ENCODE measurements at regions of chr13 and their contacts with region 1.

Region 1: GRCh38 chr13:102845630-102846260 is at the start of gene ERCC5:
- DNase-seq: peak; percentile 93
- ATAC-seq: peak; percentile 81
- H3K4me3 ChIP-seq: peak within 1 kb of the TSS; percentile 95
- H3K27ac ChIP-seq: peak within 1 kb of the TSS; percentile 74
- H3K4me1 ChIP-seq: 0 out of 2 replicates have a peak, but pooled peaks cover 6% of the 10 kb centered on the region
- H3K27me3 ChIP-seq: no peaks in the 10 kb centered on the region
- CTCF ChIP-seq: no peak
- total RNA-seq, gene ERCC5: 19.3 and 23.7 TPM in 2 replicates

Region 2: DNA sequence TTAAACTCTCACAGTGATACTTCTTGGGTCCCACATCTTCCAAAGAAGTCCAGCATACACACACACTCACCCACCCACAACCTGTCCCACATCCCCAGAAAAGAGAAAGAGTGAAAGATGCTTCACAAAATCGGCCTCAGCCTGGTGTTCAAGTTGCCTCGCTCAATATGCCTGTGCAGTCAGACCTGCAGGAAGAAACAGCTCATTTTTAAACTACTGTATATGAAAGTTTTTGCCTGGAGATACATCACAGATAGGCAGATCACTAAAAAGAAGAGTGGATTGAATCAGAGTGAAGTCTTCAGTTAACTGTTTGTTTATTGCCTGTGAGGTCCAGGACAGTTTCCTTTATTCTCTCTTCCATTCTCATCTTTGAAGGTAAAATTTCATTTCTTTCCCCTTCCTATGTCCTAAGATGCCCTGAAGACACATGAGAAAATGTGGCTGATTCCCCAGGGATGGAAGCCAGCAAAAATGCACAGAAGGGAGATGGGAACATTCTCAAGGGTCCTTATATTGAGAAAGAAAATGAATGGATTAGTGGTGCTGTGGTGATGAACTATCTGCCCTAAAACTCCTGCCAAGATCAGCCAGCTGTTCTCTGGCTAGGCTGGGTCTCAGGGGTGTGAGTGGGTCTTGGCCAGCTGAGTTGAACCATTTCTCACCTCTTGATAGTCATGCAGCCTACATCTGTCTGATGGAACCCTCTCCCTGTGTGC is 1134.3 kb before region 1 on chr13:
- CTCF ChIA-PET with region 1: no interaction called
- POLR2A ChIA-PET with region 1: no interaction called
- intact Hi-C with region 1: no loop called
- DNase-seq: no peak
- ATAC-seq: no peak
- H3K4me3 ChIP-seq: no peak overlapping the region
- H3K27ac ChIP-seq: no peak overlapping the region
- H3K4me1 ChIP-seq: peaks cover 7% of the 10 kb centered on the region
- H3K27me3 ChIP-seq: no peaks in the 10 kb centered on the region
- CTCF ChIP-seq: no peak

Region 3: DNA sequence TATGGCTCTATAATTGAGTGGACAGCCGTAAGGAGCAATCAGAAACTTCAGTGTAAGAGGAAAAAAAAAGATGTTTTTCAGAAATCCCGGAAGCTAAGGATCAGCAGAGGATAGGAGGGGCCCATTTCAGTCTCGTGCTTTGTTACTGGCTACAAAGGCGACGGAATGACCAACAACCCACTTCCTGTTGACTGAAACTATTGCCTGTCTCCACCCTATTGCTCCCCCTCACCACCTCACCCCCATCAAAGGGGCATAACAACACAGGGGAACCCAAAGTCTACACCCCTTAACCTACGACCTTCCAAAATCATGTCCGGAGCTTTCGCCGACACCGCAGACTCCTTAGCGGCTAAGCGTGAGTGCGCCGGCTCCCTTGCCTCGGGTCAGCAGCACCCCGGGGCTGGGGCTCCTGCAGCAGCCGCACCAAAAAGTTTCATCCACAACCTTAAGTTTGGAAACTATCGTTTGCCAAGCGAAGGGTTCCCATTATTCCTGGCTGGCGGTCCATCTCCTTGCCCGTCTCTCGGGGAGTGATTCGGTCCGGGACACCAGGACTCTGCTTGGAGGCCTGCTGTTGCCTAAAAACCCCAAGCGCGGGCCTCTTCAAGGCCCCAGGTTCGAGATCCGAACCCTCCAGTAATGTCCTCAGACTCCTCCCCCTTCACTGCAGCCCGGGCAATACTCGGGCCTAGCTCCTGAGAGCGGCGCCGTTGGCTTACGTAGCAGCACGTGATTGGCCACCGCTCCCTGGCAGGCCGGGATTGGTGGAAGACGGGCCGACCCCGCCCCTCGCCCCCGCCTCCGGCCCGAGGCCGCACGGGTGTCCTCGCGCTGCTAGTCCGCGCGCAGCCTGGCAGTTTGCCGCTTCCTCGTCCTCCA is 249.4 kb before region 1 on chr13 and contains the start of gene TPP2:
- CTCF ChIA-PET with region 1: no interaction called
- POLR2A ChIA-PET with region 1: interaction called, 6 read pairs
- intact Hi-C with region 1: loop called (anchors 1 kb)
- DNase-seq: peak; percentile 95
- ATAC-seq: peak; percentile 84
- H3K4me3 ChIP-seq: peak within 1 kb of the TSS; percentile 94
- H3K27ac ChIP-seq: peak within 1 kb of the TSS; percentile 82
- H3K4me1 ChIP-seq: peaks cover 19% of the 10 kb centered on the region; the same call in 1 of the 2 replicates
- H3K27me3 ChIP-seq: no peaks in the 10 kb centered on the region
- CTCF ChIP-seq: no peak
- total RNA-seq, gene TPP2: 16.1 and 30.4 TPM in 2 replicates

Region 4: DNA sequence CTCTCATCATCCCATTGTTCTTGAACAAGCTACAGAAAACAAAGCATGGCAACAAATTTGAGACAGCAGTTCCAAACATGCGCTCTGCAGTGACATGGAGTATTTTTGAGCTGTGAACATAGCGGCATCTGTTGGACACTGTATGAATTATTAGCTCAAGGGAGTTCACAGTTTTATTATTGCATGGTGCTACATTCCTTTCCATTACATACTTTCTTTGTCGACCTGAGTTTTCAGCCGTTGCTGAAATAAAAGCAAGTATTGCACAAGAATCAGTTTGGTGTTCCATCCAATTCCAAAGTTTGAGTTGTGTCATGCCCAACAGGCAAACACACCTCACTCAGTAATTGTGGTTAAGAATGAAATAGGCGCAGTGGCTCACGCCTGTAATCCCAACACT is 120.8 kb before region 1 on chr13:
- CTCF ChIA-PET with region 1: no interaction called
- POLR2A ChIA-PET with region 1: no interaction called
- intact Hi-C with region 1: loop called (anchors 1 kb)
- DNase-seq: peak; percentile 56
- ATAC-seq: peak; percentile 79
- H3K4me3 ChIP-seq: no peak overlapping the region
- H3K27ac ChIP-seq: no peak overlapping the region
- H3K4me1 ChIP-seq: peaks cover 8% of the 10 kb centered on the region; the same call in 1 of the 2 replicates
- H3K27me3 ChIP-seq: no peaks in the 10 kb centered on the region
- CTCF ChIP-seq: peak; percentile 68

Region 5: GRCh38 chr13:102800145-102801041 is 45.4 kb before region 1 on chr13:
- CTCF ChIA-PET with region 1: no interaction called
- POLR2A ChIA-PET with region 1: no interaction called
- intact Hi-C with region 1: loop called (anchors 1 kb)
- DNase-seq: peak; percentile 72
- ATAC-seq: peak; percentile 64
- H3K4me3 ChIP-seq: peak overlapping the region; percentile 85
- H3K27ac ChIP-seq: no peak overlapping the region
- H3K4me1 ChIP-seq: no peaks in the 10 kb centered on the region
- H3K27me3 ChIP-seq: no peaks in the 10 kb centered on the region
- CTCF ChIP-seq: peak; percentile 65